ENCODE measurements at regions of chr9 and their contacts with region 1.

Region 1: GRCh38 chr9:71459082-71459481 is 309.2 kb downstream of the CEMIP2 start:
- DNase-seq: no peak
- ATAC-seq: no peak
- H3K4me3 ChIP-seq: no peak overlapping the region
- H3K27ac ChIP-seq: no peak overlapping the region
- H3K4me1 ChIP-seq: no peaks in the 10 kb centered on the region
- H3K27me3 ChIP-seq: no peaks in the 10 kb centered on the region
- CTCF ChIP-seq: no peak
- EP300 ChIP-seq: no peak
- POLR2A ChIP-seq: no peak
- RAD21 ChIP-seq: no peak

Region 2: GRCh38 chr9:71233646-71234045 is 225.4 kb before region 1 on chr9:
- CTCF ChIA-PET with region 1: no interaction called
- POLR2A ChIA-PET with region 1: no interaction called
- in situ Hi-C with region 1: no loop called
- intact Hi-C with region 1: no loop called
- DNase-seq: no peak
- ATAC-seq: no peak
- H3K4me3 ChIP-seq: no peak overlapping the region
- H3K27ac ChIP-seq: no peak overlapping the region
- H3K4me1 ChIP-seq: no peaks in the 10 kb centered on the region
- H3K27me3 ChIP-seq: no peaks in the 10 kb centered on the region
- CTCF ChIP-seq: no peak
- EP300 ChIP-seq: no peak
- POLR2A ChIP-seq: no peak
- RAD21 ChIP-seq: no peak

Region 3: DNA sequence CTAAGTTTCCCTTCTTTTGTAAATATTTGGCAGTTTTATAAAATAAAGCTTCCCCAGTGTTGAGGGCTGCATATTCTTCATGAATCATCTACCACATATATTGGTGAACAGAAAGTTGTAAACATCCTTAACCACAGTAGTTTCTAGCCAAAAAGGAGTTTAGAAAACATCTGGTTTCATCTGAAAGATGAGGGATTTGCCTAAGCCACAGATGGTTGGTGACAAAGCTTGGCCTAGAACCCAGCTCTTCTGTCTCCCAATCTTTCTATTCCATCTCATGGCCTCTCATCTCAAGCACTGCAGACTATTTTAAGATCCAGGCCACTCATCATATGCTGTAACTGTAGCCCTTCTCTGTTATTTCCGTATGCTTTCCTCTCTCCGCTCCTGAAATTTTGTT is 105.4 kb before region 1 on chr9:
- CTCF ChIA-PET with region 1: no interaction called
- POLR2A ChIA-PET with region 1: no interaction called
- in situ Hi-C with region 1: no loop called
- intact Hi-C with region 1: loop called (anchors 10 kb)
- DNase-seq: no peak
- ATAC-seq: no peak
- H3K4me3 ChIP-seq: no peak overlapping the region
- H3K27ac ChIP-seq: no peak overlapping the region
- H3K4me1 ChIP-seq: no peaks in the 10 kb centered on the region
- H3K27me3 ChIP-seq: no peaks in the 10 kb centered on the region
- CTCF ChIP-seq: no peak
- EP300 ChIP-seq: no peak
- POLR2A ChIP-seq: no peak
- RAD21 ChIP-seq: no peak

Region 4: GRCh38 chr9:71624728-71625127 is 165.6 kb after region 1 on chr9:
- CTCF ChIA-PET with region 1: no interaction called
- POLR2A ChIA-PET with region 1: no interaction called
- in situ Hi-C with region 1: no loop called
- intact Hi-C with region 1: no loop called
- DNase-seq: no peak
- ATAC-seq: no peak
- H3K4me3 ChIP-seq: no peak overlapping the region
- H3K27ac ChIP-seq: no peak overlapping the region
- H3K4me1 ChIP-seq: peaks cover 0 to 7% of the 10 kb centered on the region in 2 experiments; a peak in 2 of 5 replicates
- H3K27me3 ChIP-seq: no peaks in the 10 kb centered on the region
- CTCF ChIP-seq: no peak
- EP300 ChIP-seq: no peak
- POLR2A ChIP-seq: no peak
- RAD21 ChIP-seq: no peak

Measured in K562 (cell line).